SK-N-SH (cell line): ENCODE measurements at regions of chr7 and their contacts with region 1.

Region 1: DNA sequence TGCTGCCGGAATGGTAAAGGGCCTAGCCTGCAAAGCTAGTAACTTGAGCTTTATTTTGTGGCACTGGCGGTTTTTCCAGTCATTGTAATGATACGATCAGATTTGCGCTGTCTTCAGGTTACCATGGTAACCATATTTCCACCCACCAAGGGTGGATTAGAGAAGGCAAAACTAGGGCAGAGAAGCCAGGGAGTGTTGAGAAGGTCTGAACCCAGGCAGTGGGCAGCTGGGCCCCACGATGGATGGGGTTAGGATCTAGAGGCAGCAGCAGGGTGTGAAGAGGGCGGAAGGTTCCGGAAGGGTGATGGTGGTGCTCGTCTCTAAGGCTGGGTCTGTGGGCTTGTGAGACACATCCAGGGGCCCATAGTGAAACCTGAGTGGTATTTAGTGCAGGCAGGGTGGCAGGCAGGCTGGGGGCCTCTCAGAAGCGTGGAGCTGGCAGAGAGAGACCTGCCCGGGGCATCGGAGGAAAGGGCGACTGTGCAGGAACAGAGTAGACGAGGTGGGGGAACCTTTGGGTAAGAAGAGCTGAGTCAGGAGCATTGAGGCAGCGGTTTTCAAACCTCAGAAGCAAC is 87.9 kb upstream of the GTF2I start:
- DNase-seq: peak; percentile 70
- H3K4me3 ChIP-seq: no peak overlapping the region
- H3K27ac ChIP-seq: peak overlapping the region in 1 of 2 experiments; percentile 6; a peak in 1 of 4 replicates
- H3K4me1 ChIP-seq: peaks cover 0 to 8% of the 10 kb centered on the region in 2 experiments; a peak in 1 of 4 replicates
- H3K27me3 ChIP-seq: no peaks in the 10 kb centered on the region
- CTCF ChIP-seq: no peak
- EP300 ChIP-seq: no peak
- RAD21 ChIP-seq: no peak

Region 2: DNA sequence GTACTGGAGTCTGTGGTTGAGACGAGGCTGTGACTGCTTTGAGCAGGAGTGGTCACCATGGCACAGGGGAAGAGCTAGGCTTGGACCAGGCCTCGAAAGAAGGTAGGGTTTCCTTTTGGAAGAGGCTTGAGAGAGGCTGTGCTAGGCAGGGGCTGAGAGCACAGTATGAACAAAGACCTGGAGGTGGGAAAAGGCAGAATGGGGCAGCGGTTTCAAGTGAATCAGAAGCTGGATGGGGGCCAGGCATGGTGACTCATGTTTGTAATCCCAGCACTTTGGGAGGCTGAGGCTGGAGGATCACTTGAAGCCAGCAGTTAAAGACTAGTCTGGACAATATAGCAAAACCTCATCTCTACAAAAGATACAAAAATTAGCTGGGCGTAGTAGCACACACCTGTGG is 214.5 kb before region 1 on chr7:
- CTCF ChIA-PET with region 1: no interaction called
- POLR2A ChIA-PET with region 1: no interaction called
- DNase-seq: no peak
- H3K4me3 ChIP-seq: no peak overlapping the region
- H3K27ac ChIP-seq: peak overlapping the region in 1 of 2 experiments; percentile 72; a peak in 2 of 4 replicates
- H3K4me1 ChIP-seq: peaks cover 0 to 4% of the 10 kb centered on the region in 2 experiments; a peak in 1 of 4 replicates
- H3K27me3 ChIP-seq: no peaks in the 10 kb centered on the region
- CTCF ChIP-seq: no peak
- EP300 ChIP-seq: no peak; a peak in 1 of 4 replicates
- RAD21 ChIP-seq: no peak

Region 3: GRCh38 chr7:74417419-74417971 is 152.1 kb before region 1 on chr7:
- CTCF ChIA-PET with region 1: interaction called, 130 read pairs
- POLR2A ChIA-PET with region 1: no interaction called
- DNase-seq: peak; percentile 97
- H3K4me3 ChIP-seq: peak overlapping the region in 1 of 2 experiments; percentile 6; a peak in 1 of 4 replicates
- H3K27ac ChIP-seq: no peak overlapping the region
- H3K4me1 ChIP-seq: peaks cover 0 to 3% of the 10 kb centered on the region in 2 experiments; a peak in 1 of 4 replicates
- H3K27me3 ChIP-seq: no peaks in the 10 kb centered on the region
- CTCF ChIP-seq: peak; percentile 99
- EP300 ChIP-seq: no peak
- RAD21 ChIP-seq: peak; percentile 100

Region 4: DNA sequence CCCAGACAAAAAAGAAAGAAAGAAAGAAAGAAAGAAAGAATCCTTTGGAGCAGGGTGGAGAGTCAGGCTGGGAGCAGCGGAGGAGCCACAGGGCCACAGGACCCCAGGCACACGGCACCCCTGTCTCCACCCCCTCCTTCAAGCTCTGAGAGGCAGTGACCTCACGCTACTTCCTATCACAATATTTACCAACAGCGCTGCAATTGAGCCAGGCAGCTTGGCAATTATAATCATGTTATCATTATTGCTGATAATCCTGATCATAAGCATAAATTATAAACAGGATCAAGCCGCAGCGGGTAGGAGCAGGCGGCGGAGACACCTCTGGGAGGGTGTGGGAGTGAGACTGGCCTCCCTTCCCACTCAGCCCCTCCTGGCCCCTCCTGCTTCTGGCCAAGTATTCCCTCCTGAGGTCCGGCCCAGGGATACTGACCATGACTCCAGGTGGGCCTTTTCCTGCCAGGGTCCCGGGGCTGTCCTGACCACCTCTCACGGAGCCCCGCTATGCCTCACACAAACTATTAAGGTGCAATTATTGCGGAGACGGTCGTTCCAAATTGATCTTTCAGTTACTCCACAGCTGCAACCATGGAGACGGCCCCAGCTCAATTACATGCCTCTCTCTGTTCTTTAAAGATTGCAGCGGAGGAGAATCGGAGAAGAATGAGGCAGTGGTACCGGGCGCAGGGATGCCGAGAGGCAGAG is 125.9 kb before region 1 on chr7:
- CTCF ChIA-PET with region 1: interaction called, 79 read pairs
- POLR2A ChIA-PET with region 1: no interaction called
- DNase-seq: peak; percentile 25
- H3K4me3 ChIP-seq: no peak overlapping the region
- H3K27ac ChIP-seq: no peak overlapping the region
- H3K4me1 ChIP-seq: no peaks in the 10 kb centered on the region
- H3K27me3 ChIP-seq: no peaks in the 10 kb centered on the region
- CTCF ChIP-seq: no peak
- EP300 ChIP-seq: no peak
- RAD21 ChIP-seq: no peak

Region 5: DNA sequence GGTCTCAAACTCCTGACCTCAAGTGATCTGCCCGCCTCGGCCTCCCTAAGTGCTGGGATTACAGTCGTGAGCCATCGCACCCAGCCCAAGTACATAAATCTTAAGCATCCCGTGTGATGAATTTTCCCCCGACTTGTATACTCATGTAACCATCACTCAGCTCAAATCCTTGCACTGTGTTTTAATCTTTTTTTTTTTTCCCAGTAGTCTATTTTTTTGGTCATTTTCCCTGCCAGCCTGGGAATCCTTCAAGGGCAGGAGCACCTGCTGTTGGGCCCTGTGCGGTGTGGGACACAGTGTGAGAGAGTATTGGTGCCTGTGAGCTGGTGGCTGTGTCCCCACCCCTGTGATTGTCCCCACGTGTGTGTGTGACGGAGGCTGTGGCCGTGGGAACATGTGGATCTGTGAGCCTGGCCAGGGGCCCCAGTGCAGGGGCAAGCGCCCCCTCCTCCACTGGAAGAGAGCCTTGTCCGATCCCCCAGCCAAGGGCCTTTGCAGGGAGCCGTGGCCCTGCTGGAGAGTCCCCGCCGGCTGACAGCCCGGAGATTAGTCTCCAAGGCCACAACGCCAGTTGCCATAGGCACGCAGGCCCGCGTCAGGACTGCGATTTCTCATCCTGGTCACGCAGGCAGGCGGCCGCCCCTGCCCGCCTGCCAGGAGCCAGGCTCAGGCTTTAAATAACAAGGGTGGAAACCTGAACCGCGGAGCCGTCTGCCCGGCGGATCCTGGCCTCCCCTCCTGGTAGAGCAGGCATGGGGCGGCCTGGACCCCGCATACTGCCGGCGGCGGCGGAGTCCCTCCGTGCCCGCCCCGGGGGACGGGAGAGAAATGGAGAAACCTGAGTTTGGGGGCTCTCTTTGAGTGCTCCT is 89.4 kb before region 1 on chr7:
- CTCF ChIA-PET with region 1: interaction called, 13 read pairs
- POLR2A ChIA-PET with region 1: no interaction called
- DNase-seq: peak; percentile 95
- H3K4me3 ChIP-seq: peak overlapping the region in 1 of 2 experiments; percentile 28; a peak in 2 of 4 replicates
- H3K27ac ChIP-seq: peak overlapping the region; percentile 73 to 83
- H3K4me1 ChIP-seq: peaks cover 50 to 52% of the 10 kb centered on the region in 2 experiments; a peak in 3 of 4 replicates
- H3K27me3 ChIP-seq: no peaks in the 10 kb centered on the region
- CTCF ChIP-seq: no peak; the same call in 1 of the 2 replicates
- EP300 ChIP-seq: no peak
- RAD21 ChIP-seq: peak; percentile 17; the same call in 1 of the 2 replicates

Region 6: DNA sequence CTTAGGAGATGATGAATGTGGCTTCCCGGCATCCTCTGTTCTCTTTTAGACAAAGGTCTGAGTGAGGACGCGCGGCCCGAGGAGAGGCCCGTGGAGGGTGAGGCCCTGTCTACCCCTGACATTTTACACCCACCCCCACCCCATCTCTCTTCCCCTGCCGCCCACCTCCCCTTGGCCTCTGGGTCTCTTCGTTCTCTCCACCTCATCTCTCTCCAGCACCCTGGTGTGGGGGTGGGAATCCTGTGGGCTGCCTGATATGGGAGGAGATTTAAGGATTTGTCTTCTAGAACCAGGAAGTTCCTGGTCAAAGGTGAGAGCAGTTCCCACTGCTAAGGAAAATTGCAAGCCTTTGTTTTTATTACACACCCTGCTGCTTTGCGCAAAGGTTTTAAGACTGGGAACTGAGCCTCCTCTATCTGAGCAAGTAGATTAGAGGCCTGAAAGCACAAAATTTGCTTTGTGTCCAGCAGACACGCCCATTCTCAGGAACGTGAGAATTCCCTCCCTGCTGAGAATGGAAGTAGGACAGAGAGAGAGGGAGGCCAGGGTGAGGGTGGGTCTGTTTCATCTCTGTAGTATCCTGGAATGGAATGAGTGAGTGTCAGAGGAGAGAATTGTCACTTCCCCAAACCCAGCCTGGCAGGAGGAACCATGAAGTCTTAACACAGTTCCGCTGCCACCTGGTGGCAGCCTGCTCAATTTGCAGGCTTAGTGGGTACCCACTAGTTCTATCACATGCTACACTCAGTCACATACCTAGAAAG is 24.7 kb before region 1 on chr7:
- CTCF ChIA-PET with region 1: interaction called, 13 read pairs
- POLR2A ChIA-PET with region 1: no interaction called
- DNase-seq: peak; percentile 77
- H3K4me3 ChIP-seq: no peak overlapping the region
- H3K27ac ChIP-seq: no peak overlapping the region
- H3K4me1 ChIP-seq: peaks cover 0 to 2% of the 10 kb centered on the region in 2 experiments; a peak in 1 of 4 replicates
- H3K27me3 ChIP-seq: no peaks in the 10 kb centered on the region
- CTCF ChIP-seq: peak; percentile 62
- EP300 ChIP-seq: no peak
- RAD21 ChIP-seq: peak; percentile 72